IMR-90 (cell line): ENCODE measurements at regions of chr18 and their contacts with region 1.

Region 1: GRCh38 chr18:2758309-2758708 is 88.5 kb upstream of the EMILIN2 start:
- DNase-seq: no peak
- ATAC-seq: no peak
- H3K4me3 ChIP-seq: no peak overlapping the region
- H3K27ac ChIP-seq: no peak overlapping the region
- H3K4me1 ChIP-seq: no peaks in the 10 kb centered on the region
- H3K27me3 ChIP-seq: no peaks in the 10 kb centered on the region
- CTCF ChIP-seq: no peak
- POLR2A ChIP-seq: no peak
- RAD21 ChIP-seq: no peak

Region 2: GRCh38 chr18:2797951-2798350 is 39.6 kb after region 1 on chr18:
- CTCF ChIA-PET with region 1: no interaction called
- POLR2A ChIA-PET with region 1: no interaction called
- dilution Hi-C with region 1: no loop called
- in situ Hi-C with region 1: no loop called
- intact Hi-C with region 1: loop called (anchors 5 kb)
- DNase-seq: no peak
- ATAC-seq: no peak
- H3K4me3 ChIP-seq: no peak overlapping the region
- H3K27ac ChIP-seq: no peak overlapping the region
- H3K4me1 ChIP-seq: no peaks in the 10 kb centered on the region
- H3K27me3 ChIP-seq: no peaks in the 10 kb centered on the region
- CTCF ChIP-seq: no peak
- POLR2A ChIP-seq: no peak
- RAD21 ChIP-seq: no peak

Region 3: GRCh38 chr18:2978646-2979045 is 220.3 kb after region 1 on chr18:
- CTCF ChIA-PET with region 1: no interaction called
- POLR2A ChIA-PET with region 1: no interaction called
- dilution Hi-C with region 1: no loop called
- in situ Hi-C with region 1: no loop called
- intact Hi-C with region 1: no loop called
- DNase-seq: peak; percentile 91
- ATAC-seq: peak; percentile 60
- H3K4me3 ChIP-seq: peak overlapping the region; percentile 41; the same call in 1 of the 2 replicates
- H3K27ac ChIP-seq: peak overlapping the region; percentile 68; the same call in 1 of the 2 replicates
- H3K4me1 ChIP-seq: peaks cover 29% of the 10 kb centered on the region
- H3K27me3 ChIP-seq: no peaks in the 10 kb centered on the region
- CTCF ChIP-seq: no peak
- POLR2A ChIP-seq: no peak
- RAD21 ChIP-seq: no peak; the same call in 1 of the 2 replicates